ENCODE measurements at regions of chr15 and their contacts with region 1.

Region 1: DNA sequence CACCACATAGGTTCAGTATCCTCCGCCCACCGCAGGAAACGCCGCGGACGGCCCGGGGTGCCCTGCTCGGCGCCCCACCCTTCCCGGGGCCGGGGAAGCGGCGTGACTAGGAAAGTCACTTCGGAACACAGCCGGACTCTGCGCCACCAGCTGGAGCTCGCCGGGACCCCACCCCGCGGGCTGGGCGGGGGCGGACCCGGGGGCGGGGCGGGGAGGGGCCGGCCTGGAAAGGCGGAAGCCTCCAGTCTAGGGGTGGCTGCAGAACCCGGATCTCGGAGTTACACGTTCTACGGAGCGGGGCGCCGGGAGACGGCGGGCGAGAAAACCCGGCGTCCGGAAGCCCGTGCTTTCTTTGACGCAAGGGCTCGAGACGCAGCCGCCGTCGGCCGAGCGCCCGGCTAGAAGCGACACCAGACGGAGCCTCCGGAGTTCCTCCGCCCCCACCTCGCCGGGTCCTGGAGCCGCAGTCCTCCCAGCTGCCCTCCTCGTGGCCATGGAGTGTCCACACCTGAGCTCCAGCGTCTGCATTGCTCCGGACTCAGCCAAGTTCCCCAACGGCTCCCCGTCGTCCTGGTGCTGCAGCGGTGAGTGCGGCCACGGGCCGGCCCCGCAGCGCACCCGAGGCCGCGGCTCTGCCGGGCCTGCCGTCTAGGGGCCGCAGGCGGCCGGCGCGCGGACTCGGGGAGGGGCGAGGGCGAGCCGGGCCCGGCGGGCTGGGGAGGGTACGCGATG is at the start of gene USP3:
- DNase-seq: peak; percentile 93 to 96 (median 94)
- ATAC-seq: peak; percentile 89
- H3K4me3 ChIP-seq: peak within 1 kb of the TSS; percentile 87
- H3K27ac ChIP-seq: peak within 1 kb of the TSS; percentile 95
- H3K4me1 ChIP-seq: peaks cover 23 to 39% of the 10 kb centered on the region in 2 experiments
- H3K27me3 ChIP-seq: no peaks in the 10 kb centered on the region
- CTCF ChIP-seq: peak in 2 of 3 experiments; percentile 17 to 44; a peak in 3 of 6 replicates
- EP300 ChIP-seq: peak; percentile 68; the same call in 1 of the 2 replicates
- POLR2A ChIP-seq: peak; percentile 88
- RAD21 ChIP-seq: peak in 1 of 2 experiments; percentile 2; a peak in 1 of 4 replicates
- polyA plus RNA-seq, gene USP3: 24.3 to 34.8 TPM

Region 2: GRCh38 chr15:63466378-63467192 is 37.8 kb before region 1 on chr15:
- CTCF ChIA-PET with region 1: no interaction called
- POLR2A ChIA-PET with region 1: interaction called, 5 read pairs
- in situ Hi-C with region 1: no loop called
- intact Hi-C with region 1: loop called (anchors 1 kb)
- DNase-seq: peak; percentile 66 to 81 (median 74)
- ATAC-seq: peak; percentile 96
- H3K4me3 ChIP-seq: no peak overlapping the region
- H3K27ac ChIP-seq: no peak overlapping the region
- H3K4me1 ChIP-seq: peaks cover 0 to 8% of the 10 kb centered on the region in 2 experiments; a peak in 2 of 5 replicates
- H3K27me3 ChIP-seq: no peaks in the 10 kb centered on the region
- CTCF ChIP-seq: peak; percentile 71 to 77 (median 76)
- EP300 ChIP-seq: no peak
- POLR2A ChIP-seq: no peak
- RAD21 ChIP-seq: peak; percentile 74 to 89

Region 3: GRCh38 chr15:63487076-63487757 is 17.2 kb before region 1 on chr15:
- CTCF ChIA-PET with region 1: no interaction called
- POLR2A ChIA-PET with region 1: interaction called, 12 read pairs
- in situ Hi-C with region 1: no loop called
- intact Hi-C with region 1: loop called (anchors 1 kb)
- DNase-seq: peak; percentile 87 to 90 (median 89)
- ATAC-seq: peak; percentile 97
- H3K4me3 ChIP-seq: no peak overlapping the region
- H3K27ac ChIP-seq: peak overlapping the region; percentile 37; the same call in 2 of the 3 replicates
- H3K4me1 ChIP-seq: peaks cover 4 to 16% of the 10 kb centered on the region in 2 experiments; a peak in 4 of 5 replicates
- H3K27me3 ChIP-seq: no peaks in the 10 kb centered on the region
- CTCF ChIP-seq: peak; percentile 84 to 97 (median 91)
- EP300 ChIP-seq: no peak
- POLR2A ChIP-seq: no peak
- RAD21 ChIP-seq: peak; percentile 65 to 70

Region 4: DNA sequence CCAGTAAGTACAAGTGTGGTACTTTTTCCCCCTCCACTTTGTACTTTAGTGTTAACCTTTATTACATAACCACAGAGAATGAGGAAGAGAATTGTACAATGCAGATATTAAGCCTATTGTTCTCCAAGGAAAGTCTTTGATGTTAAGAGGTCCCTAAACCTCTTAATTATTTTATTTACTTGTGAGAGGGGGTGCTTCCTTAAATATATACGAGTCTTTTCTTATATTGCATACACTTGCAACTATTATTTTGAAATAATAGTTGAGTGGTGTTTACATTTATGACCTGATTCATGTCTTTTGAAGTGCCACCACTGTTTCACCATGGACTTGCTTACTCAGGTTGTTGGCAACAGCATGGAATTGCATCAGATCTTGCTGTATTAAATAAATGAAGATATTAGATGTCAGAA is 10.1 kb after region 1 on chr15:
- CTCF ChIA-PET with region 1: no interaction called
- POLR2A ChIA-PET with region 1: interaction called, 51 read pairs
- in situ Hi-C with region 1: no loop called
- intact Hi-C with region 1: no loop called
- DNase-seq: no peak
- ATAC-seq: no peak
- H3K4me3 ChIP-seq: no peak overlapping the region
- H3K27ac ChIP-seq: no peak overlapping the region
- H3K4me1 ChIP-seq: peaks cover 15 to 32% of the 10 kb centered on the region in 2 experiments
- H3K27me3 ChIP-seq: no peaks in the 10 kb centered on the region
- CTCF ChIP-seq: no peak
- EP300 ChIP-seq: no peak
- POLR2A ChIP-seq: no peak
- RAD21 ChIP-seq: no peak

Region 5: DNA sequence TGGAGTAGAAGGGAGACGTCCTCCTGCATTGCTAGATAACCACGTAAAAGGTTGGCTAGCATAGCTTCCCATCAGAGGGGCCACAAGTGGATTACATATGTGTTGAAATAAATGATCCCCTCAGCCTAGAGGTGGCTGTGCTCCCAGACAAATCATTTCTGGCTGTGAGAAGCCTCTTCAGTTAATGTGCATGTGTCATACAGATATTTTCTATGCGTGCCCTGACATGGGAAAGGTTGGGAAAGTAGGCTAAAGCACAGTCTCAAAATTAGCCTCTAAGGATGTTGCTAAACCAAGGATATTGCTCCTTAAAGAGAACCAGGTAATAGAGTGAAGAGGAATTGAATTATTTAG is 17.8 kb after region 1 on chr15:
- CTCF ChIA-PET with region 1: interaction called, 3 read pairs
- POLR2A ChIA-PET with region 1: interaction called, 51 read pairs
- in situ Hi-C with region 1: no loop called
- intact Hi-C with region 1: no loop called
- DNase-seq: no peak
- ATAC-seq: peak; percentile 30
- H3K4me3 ChIP-seq: no peak overlapping the region
- H3K27ac ChIP-seq: peak overlapping the region; percentile 46; the same call in 2 of the 3 replicates
- H3K4me1 ChIP-seq: peaks cover 16 to 50% of the 10 kb centered on the region in 2 experiments; a peak in 4 of 5 replicates
- H3K27me3 ChIP-seq: no peaks in the 10 kb centered on the region
- CTCF ChIP-seq: no peak; a peak in 1 of 6 replicates
- EP300 ChIP-seq: no peak
- POLR2A ChIP-seq: no peak
- RAD21 ChIP-seq: no peak

Region 6: GRCh38 chr15:63556246-63556645 is 51.8 kb after region 1 on chr15:
- CTCF ChIA-PET with region 1: no interaction called
- POLR2A ChIA-PET with region 1: interaction called, 3 read pairs
- in situ Hi-C with region 1: no loop called
- intact Hi-C with region 1: loop called (anchors 5 kb)
- DNase-seq: no peak
- ATAC-seq: no peak
- H3K4me3 ChIP-seq: no peak overlapping the region
- H3K27ac ChIP-seq: no peak overlapping the region
- H3K4me1 ChIP-seq: no peaks in the 10 kb centered on the region
- H3K27me3 ChIP-seq: no peaks in the 10 kb centered on the region
- CTCF ChIP-seq: no peak
- EP300 ChIP-seq: no peak
- POLR2A ChIP-seq: no peak
- RAD21 ChIP-seq: no peak